ENCODE measurements at regions of chr11 and their contacts with region 1.

Region 1: GRCh38 chr11:110200241-110200640 is 96.2 kb downstream of the RDX start:
- DNase-seq: no peak
- H3K4me3 ChIP-seq: no peak overlapping the region
- H3K27ac ChIP-seq: no peak overlapping the region
- H3K4me1 ChIP-seq: no peaks in the 10 kb centered on the region
- H3K27me3 ChIP-seq: no peaks in the 10 kb centered on the region
- CTCF ChIP-seq: no peak

Region 2: DNA sequence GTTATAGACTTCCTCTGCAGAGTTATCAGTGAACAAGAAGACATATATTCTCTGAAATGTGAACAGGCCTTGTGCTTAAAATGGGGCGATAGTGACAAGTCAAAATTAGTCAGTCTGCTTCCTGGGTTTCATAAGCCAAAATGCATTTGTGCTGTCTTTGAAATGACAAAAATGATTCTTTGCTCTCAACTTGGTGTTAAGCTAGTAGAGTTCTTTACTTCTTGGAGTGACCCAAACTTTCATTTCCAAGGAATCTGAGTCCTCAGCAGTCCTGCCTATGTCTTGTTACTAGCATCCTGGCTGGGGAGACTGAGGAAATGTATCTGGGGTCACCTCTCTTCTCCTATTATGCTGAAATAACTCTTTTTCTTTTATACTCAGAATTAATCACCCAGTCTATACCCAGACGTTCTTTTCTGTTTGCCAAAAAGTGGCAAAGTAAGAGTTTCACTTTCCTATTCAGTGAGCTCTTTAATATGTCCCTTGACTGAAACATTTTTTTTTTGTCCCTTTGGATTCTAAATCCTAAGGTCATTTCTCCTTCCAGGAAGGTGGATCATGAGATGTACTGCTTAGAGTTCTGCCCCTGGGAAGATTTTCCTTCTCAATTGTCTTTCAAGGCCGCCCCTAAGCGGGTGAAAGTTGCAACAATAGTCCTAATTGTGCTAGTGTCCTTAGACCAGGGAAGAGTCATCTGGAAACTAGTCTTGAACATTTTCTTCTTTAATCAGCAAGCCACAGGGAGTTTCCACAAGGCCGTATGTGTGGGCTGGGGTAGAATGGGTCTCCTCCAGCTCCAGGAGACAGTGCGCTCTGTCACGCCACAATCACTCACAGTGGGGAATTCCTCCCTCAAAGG is 149.1 kb after region 1 on chr11:
- intact Hi-C with region 1: no loop called
- DNase-seq: no peak
- H3K4me3 ChIP-seq: no peak overlapping the region
- H3K27ac ChIP-seq: no peak overlapping the region
- H3K4me1 ChIP-seq: no peaks in the 10 kb centered on the region
- H3K27me3 ChIP-seq: no peaks in the 10 kb centered on the region
- CTCF ChIP-seq: no peak

Region 3: DNA sequence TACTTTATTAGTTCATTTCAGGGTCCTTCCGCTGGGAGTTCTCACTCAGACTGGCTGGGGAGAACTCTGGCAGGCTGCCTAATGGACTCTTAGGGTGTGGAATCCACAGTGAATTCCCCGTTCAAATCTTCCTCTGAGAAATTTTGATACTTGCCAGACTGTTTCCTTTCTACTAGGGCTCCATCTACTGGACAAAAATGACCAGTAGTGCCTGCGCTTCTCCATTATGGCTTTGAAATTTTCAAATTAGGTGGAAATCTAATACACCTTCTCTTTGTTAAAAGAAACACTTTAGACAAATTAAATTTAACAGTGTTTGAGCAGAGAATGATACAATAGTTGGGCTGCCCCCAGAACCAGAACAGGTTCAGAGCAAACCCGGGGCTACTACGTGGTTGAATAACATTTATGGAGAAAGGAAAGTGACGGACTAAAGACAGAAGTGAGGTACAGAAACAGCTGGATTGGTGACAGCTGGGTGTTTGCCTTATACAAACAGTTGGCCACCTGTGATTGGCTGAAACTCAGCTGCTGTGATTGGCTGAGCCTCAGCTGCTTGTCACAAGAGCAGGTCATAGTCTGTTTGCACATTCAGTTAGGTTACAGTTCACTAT is 176.6 kb after region 1 on chr11:
- intact Hi-C with region 1: loop called (anchors 1 kb)
- DNase-seq: peak; percentile 39 to 79
- H3K4me3 ChIP-seq: peak overlapping the region in 1 of 2 donors; percentile 24
- H3K27ac ChIP-seq: peak overlapping the region in 1 of 2 donors; percentile 29
- H3K4me1 ChIP-seq: peaks cover 0 to 6% of the 10 kb centered on the region in 2 donors
- H3K27me3 ChIP-seq: no peaks in the 10 kb centered on the region
- CTCF ChIP-seq: peak; percentile 41 to 81 (median 71)